ENCODE measurements at regions of chr19 and their contacts with region 1.

Region 1: DNA sequence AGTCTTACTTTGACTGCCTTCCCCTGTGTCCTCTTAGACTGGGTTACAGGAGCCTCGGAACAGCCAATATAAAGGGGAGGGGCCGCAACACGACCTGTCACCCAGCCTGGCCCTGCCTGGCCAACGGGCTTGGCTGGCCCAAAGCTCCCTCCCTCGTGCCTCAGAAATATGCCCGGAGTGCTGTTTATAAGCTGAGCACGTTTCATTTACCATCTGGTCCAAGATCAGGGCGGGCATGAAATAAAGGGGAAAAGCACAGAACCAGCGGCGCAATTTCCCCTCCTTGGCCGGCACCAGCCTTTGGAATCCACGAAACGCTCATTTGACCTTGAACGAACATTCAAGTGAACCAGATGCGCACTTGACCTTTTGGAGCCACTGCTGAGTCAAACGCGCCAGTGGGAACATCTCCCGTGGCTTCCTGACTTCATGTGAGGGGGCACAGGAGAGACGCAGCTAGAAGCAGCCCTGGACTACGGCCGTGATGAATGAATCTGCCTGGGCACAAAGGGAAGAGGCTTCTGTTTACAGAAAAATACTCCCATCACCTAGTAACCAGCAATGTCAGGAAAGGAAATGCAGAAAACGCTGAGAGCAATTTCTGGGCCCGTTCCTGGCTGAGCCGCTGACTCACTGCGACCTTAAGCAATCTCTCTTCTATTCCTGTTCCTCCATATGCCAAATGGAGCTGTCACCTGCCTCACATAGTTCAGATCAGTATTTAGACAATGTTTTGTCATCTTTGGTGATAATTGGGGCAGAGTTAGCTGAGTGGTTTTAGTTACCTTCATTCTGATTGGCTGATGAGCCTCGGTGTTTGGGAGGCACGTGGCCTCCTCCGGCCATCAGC is 53.3 kb downstream of the RFX2 start:
- DNase-seq: peak; percentile 88
- ATAC-seq: peak; percentile 87

Region 2: DNA sequence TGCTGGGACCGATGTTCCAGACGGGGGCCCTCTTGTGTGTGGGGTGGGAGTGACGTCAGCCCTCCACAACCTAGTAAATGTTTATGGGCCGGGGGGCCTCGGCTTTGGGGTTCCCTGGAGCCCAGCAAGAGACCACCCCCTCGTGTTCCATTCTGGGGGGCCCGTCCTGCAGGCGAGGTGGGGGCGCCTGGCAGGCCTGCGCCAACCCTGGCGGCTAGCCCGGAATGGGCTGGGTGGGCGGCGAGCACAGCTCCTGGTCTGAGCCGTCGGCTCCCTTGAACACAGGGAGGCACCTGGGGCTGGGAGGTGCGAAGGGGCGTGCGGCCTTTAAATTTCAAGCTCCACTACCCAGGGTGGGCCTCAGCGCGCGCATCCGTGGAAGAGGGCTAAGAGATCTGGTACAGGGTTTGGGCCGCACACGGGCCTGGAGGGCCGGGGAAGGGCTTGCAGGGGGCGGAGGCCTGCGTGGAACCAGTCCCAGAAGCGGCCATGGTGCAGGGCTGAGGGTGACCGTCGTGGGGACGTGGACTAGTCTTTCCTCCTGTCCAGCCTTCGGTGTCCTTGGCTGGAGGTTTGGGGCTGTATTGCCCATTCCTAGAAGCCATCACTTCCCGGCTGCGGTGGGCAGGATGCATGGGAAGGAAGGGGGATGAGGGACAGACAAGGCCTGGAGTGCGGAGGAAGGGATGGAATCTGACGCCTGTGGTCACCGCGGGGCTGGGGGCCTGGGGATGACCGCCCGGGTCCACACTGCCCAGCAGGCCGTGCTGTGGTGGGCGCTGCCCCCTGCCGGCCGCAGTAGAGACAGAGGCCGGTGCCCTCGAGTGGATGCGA is 164.9 kb before region 1 on chr19:
- intact Hi-C with region 1: no loop called
- DNase-seq: no peak
- ATAC-seq: peak; percentile 61

Region 3: DNA sequence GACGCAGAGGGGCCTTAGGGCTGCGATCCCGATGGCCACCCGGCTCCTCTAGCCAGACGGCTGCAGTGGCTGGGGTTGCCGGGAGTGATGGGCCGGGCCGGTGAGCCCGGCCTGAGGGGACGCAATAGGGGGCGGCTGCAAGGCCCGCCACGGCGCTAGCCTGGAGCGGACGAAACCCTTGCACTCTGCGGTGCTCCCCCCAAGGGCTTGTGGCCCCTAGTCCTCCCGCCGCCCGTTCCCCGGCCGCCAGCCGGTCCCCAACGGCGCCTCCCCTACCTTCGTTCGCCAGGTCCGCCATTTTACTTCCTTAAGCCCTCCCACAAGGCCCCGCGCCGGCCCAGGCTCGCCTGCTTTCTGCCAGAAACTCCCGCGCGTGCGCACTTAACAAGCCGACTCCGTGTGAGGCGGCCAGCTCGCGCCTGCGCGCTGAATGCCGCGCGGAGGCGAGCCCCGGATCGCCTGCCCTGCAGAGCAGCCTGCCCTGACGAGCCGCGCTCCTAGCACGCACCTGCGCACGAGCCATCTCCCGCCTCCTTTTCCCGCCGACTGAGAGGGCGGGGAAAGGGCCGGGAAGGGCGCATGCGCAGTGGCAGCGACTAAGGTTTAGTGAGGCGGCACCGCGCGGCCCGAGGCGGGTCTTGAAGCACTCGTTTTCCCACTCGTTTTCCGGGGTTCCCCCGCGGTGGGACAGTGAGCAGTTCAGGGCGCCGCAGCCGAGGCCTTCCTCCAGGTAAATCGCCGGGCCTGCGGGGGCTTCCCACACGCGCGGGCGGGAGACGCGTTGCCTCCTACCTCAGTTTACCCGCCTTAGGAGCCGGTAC is 79.0 kb before region 1 on chr19 and contains the start of gene RANBP3:
- intact Hi-C with region 1: no loop called
- DNase-seq: peak; percentile 100
- ATAC-seq: peak; percentile 98
- total RNA-seq, gene RANBP3: 65.6 TPM

Region 4: GRCh38 chr19:6076675-6077463 is 19.8 kb after region 1 on chr19:
- intact Hi-C with region 1: no loop called
- DNase-seq: no peak
- ATAC-seq: no peak

Region 5: DNA sequence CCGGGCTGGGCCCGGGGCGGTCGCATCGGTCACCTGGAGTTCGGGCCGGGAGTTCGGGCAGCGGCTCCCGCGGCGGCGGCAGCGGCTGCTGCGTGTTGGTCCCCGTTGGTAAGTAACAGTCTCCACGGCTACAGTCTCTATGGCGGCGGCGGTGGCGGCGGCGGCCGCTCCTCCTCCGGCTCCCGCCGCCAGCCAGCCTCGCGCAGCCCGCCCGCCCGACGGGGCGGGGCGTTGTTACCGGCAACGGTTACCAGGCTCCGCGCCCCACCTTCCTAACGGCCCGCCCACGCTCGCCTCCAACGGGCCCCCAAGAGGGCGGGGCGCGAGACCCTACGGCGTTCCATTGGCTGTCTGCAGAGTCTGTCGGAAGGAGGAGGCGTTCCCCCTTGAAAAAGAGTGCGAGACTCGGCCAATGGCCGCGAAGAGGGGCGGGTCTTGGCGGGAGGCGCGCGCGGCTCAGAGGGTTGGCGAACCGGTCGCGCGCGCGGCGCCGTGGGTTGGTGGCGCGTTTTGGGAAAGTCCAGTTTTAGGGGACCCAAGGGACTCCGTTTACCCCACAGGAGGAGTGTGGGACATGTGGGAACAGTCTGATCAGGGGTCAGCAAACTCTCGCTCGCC is 53.4 kb after region 1 on chr19 and contains the start of gene RFX2:
- intact Hi-C with region 1: loop called (anchors 1 kb)
- DNase-seq: peak; percentile 99
- ATAC-seq: peak; percentile 99
- total RNA-seq, gene RFX2: 5.4 TPM